ENCODE measurements at regions of chr22 and their contacts with region 1.

Region 1: DNA sequence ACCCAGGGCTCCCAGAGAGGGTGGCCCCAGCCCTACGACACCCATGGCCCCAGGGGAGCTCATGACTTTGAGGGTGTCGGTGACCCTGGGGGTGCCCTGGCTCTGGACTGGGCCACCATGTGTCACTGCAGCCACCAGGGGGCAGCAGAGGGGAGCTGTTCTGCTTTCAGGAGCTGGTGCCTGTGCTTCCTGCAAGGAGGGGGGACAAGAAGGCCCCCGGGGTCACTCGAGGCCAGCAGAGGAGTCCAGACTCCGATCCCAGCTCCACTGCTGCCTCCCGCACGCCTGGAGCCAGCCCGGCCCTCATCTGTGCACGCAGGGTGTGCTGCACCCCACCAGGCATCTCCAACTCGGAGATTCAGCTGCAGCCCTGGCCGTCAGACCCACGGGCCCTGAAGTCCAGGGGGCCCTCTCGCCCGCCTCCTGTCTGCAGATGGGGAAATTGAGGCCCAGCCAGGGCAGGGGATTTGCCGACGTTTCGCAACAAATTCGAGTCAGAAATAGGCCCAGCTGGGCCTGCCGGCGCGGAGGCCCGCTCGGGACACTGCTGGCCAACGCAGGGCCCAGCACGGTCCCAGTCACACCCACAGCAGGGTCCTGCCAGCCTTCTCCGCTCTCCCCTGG is 29.5 kb upstream of the WNT7B start:
- DNase-seq: peak; percentile 94 to 96
- H3K4me3 ChIP-seq: no peak overlapping the region
- H3K27ac ChIP-seq: peak overlapping the region; percentile 98 to 99
- H3K4me1 ChIP-seq: peaks cover 18 to 20% of the 10 kb centered on the region in 2 donors
- H3K27me3 ChIP-seq: no peaks in the 10 kb centered on the region
- CTCF ChIP-seq: peak; percentile 87 to 98 (median 96)
- POLR2A ChIP-seq: peak in 1 of 2 donors; percentile 25

Region 2: GRCh38 chr22:45934659-45935341 is 71.7 kb before region 1 on chr22:
- intact Hi-C with region 1: no loop called
- DNase-seq: peak in 1 of 2 donors; percentile 28
- H3K4me3 ChIP-seq: no peak overlapping the region
- H3K27ac ChIP-seq: no peak overlapping the region
- H3K4me1 ChIP-seq: no peaks in the 10 kb centered on the region
- H3K27me3 ChIP-seq: no peaks in the 10 kb centered on the region
- CTCF ChIP-seq: no peak
- POLR2A ChIP-seq: no peak

Region 3: DNA sequence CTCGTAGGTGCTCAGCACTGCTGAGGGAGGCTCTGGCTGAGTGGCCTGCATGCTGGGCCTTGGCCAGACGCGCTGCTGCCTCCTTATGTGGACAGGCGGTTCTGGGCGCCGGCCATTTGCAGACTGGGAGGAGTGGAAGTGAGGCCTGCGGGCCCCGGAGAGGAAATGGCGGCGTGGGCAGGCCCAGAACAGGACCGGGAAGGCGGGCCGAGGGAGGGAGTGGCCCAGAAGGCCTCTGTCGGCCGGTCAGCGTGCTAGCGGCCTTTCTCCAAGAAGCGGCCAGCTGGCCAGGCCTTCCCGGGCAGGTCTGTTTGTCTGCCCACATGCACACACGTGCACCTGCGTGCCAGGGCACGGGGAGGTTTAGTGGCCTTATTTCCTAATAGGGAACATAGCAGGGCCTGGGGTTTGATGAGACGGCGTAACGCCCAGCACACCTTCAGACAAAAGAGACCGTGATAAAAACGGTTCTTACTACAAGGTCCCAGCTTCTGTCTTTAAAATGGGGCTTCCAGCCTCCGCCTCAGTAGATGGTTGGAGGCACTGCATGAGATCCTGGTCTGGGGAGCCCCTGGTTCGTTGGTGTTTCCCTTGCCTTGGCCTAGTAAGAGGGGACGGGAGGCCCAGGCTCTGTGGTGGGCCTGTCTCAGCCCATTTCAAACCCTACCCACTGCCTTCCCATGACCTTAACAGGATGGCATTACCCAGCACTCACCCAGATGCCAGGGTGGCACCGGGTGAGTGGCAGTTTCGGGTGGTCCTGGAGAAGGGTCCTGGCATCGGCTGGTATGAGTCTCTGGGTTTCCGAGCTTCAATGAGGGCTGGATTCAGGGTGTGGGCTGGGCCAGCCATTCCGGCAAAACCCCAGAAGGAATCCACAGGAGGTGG is 78.7 kb after region 1 on chr22:
- intact Hi-C with region 1: no loop called
- DNase-seq: peak; percentile 92 to 94
- H3K4me3 ChIP-seq: peak overlapping the region; percentile 19 to 88
- H3K27ac ChIP-seq: peak overlapping the region; percentile 99 to 100
- H3K4me1 ChIP-seq: peaks cover 22 to 55% of the 10 kb centered on the region in 2 donors
- H3K27me3 ChIP-seq: no peaks in the 10 kb centered on the region
- CTCF ChIP-seq: peak in 2 of 4 experiments; percentile 9 to 15
- POLR2A ChIP-seq: peak; percentile 54 to 74

Region 4: DNA sequence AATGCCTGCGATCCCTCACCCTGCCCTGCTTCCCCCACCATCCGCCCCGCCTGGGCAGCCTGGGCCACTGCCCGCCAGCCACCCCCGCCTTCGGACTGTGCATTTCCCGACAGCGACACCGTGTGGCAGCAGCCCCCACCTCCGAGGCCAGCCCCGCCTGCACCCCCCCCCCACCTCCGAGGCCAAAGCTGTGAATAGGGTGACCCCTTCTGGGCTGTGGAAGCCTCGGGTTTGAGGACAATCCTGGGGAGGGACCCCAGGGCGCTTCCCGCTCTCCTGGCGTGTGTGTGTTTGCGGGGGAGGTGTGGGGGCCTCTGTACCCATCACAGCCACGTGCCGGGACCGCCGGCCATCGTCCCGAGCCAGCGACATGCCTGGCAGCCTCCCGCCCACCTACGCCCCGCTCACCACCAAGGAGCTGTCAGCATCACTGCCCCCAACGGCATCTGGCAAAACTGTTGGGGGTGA is 110.0 kb after region 1 on chr22:
- intact Hi-C with region 1: loop called (anchors 5 kb)
- DNase-seq: peak; percentile 96
- H3K4me3 ChIP-seq: no peak overlapping the region
- H3K27ac ChIP-seq: peak overlapping the region; percentile 86 to 100
- H3K4me1 ChIP-seq: peaks cover 6 to 24% of the 10 kb centered on the region in 2 donors
- H3K27me3 ChIP-seq: no peaks in the 10 kb centered on the region
- CTCF ChIP-seq: peak; percentile 96 to 99 (median 98)
- POLR2A ChIP-seq: peak in 1 of 2 donors; percentile 14